Spleen (tissue), 13 donors: ENCODE measurements at regions of chr5 and their contacts with region 1.

Region 1: GRCh38 chr5:150846654-150847333 is 473 bp downstream of the IRGM start:
- DNase-seq: peak; percentile 67
- H3K4me3 ChIP-seq: peak overlapping the region in 6 of 8 donors; percentile 1 to 52 (median 17)
- H3K27ac ChIP-seq: peak overlapping the region in 6 of 8 donors; percentile 4 to 64 (median 46)
- H3K4me1 ChIP-seq: peaks cover 0 to 14% (median 3%) of the 10 kb centered on the region in 6 donors
- H3K27me3 ChIP-seq: no peaks in the 10 kb centered on the region
- CTCF ChIP-seq: peak in 10 of 11 experiments; percentile 43 to 85 (median 71)
- POLR2A ChIP-seq: no peak

Region 2: GRCh38 chr5:150560401-150561193 is 286.2 kb before region 1 on chr5:
- intact Hi-C with region 1: loop called (anchors 5 kb)
- DNase-seq: no peak
- H3K4me3 ChIP-seq: no peak overlapping the region
- H3K27ac ChIP-seq: peak overlapping the region in 2 of 8 donors; percentile 11 to 32
- H3K4me1 ChIP-seq: peaks cover 0 to 23% (median 10%) of the 10 kb centered on the region in 6 donors
- H3K27me3 ChIP-seq: no peaks in the 10 kb centered on the region
- CTCF ChIP-seq: peak; percentile 77 to 96 (median 92)
- POLR2A ChIP-seq: no peak

Region 3: DNA sequence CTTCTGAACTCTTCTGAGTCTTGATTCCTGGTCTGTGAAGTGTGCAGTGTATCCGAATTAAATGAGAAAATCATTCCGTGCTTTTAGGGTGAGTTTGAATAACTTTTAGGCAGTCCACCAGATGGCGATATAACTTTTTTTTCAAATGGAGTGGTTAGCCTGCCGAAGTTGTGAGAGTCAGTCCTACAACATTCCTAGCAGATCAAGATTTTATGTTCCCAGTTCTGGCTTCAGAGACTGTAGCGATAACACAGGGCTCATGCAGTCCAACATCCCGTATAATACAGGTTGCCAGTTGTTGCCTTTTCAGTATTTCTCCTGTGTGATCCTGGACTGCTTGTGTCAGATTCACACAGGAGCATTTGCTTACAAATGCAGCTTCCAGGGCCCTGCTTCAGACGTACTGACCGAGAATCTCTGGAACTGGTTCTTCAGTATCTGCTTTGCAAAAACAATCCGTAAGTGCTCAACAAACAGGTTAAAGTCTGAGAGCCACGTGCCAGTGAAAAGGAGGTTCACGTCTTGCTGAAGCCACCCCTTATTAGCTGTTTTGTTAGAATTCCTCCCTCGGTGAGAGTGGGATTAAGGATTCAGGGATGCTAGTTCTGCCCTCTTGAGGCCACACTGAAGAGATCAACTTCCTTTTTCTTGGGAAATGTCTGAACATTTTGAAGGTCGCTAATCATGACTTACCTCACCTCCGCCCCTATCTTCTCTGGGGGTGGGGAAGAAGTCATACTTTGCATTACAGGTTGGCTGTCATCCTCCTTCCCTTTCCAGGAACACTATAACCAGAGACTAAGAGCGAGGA is 45.5 kb before region 1 on chr5:
- intact Hi-C with region 1: loop called (anchors 5 kb)
- DNase-seq: no peak
- H3K4me3 ChIP-seq: peak overlapping the region in 2 of 8 donors; percentile 6 to 51
- H3K27ac ChIP-seq: peak overlapping the region in 5 of 8 donors; percentile 33 to 64 (median 46)
- H3K4me1 ChIP-seq: peaks cover 0 to 17% (median 7%) of the 10 kb centered on the region in 6 donors
- H3K27me3 ChIP-seq: no peaks in the 10 kb centered on the region
- CTCF ChIP-seq: peak in 10 of 11 experiments; percentile 33 to 68 (median 48)
- POLR2A ChIP-seq: no peak

Region 4: GRCh38 chr5:151345808-151346478 is 499.1 kb after region 1 on chr5:
- intact Hi-C with region 1: no loop called
- DNase-seq: no peak
- H3K4me3 ChIP-seq: no peak overlapping the region
- H3K27ac ChIP-seq: no peak overlapping the region
- H3K4me1 ChIP-seq: no peaks in the 10 kb centered on the region
- H3K27me3 ChIP-seq: peaks cover 0 to 50% (median 0%) of the 10 kb centered on the region in 7 donors
- CTCF ChIP-seq: no peak
- POLR2A ChIP-seq: no peak